A673 (cell line): ENCODE measurements at regions of chr3 and their contacts with region 1.

Region 1: DNA sequence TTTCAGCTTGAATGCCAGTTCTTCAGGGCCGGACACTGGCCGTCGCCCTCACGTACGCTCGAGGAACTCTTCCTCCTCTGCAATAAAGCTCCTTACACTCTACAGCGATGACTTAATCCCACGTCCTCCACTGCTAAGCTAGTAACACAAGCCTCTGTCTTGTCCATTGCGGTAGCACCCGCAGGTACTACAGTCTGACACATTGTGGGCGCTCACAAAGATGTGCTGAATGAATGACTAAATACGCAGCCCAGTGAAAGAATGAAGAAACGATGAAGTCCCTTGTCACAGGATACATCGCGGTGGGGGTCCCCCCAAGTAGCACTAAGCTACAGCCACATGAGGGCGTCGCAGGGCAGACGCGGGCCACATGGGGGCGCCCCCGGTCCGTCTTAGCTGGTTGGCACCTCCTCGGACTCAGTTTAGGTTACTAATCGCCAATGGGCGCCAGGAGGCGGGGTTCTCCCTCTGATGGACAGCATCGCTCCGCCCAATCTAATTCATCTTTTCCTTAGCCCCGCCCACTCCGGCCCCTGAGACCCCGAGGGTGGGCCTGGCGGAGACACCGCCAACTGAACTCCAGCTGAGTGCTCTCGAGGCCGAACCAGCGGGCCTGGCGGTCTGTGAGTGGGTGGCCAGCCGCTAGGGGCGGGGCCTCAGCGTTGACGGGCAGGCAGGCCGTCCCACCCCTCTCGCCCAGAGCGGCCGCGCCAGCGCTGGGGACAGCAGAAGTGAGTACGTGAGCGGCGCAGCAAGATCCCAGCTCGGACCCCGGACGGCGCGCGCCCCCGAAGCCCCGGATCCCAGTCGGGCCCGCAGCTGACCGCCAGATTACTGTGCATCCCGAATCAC is at the start of gene EPHB3:
- DNase-seq: peak; percentile 99
- H3K4me3 ChIP-seq: peak within 1 kb of the TSS; percentile 77
- H3K27ac ChIP-seq: peak within 1 kb of the TSS; percentile 8
- H3K4me1 ChIP-seq: peaks cover 16% of the 10 kb centered on the region
- H3K27me3 ChIP-seq: no peaks in the 10 kb centered on the region
- CTCF ChIP-seq: peak; percentile 100
- total RNA-seq, gene EPHB3: 15.6 and 19.4 TPM in 2 replicates

Region 2: GRCh38 chr3:184727357-184728009 is 166.2 kb after region 1 on chr3:
- CTCF ChIA-PET with region 1: interaction called, 5 read pairs
- POLR2A ChIA-PET with region 1: no interaction called
- intact Hi-C with region 1: loop called (anchors 1 kb)
- DNase-seq: peak; percentile 75
- H3K4me3 ChIP-seq: no peak overlapping the region
- H3K27ac ChIP-seq: no peak overlapping the region
- H3K4me1 ChIP-seq: no peaks in the 10 kb centered on the region
- H3K27me3 ChIP-seq: no peaks in the 10 kb centered on the region
- CTCF ChIP-seq: peak; percentile 85

Region 3: DNA sequence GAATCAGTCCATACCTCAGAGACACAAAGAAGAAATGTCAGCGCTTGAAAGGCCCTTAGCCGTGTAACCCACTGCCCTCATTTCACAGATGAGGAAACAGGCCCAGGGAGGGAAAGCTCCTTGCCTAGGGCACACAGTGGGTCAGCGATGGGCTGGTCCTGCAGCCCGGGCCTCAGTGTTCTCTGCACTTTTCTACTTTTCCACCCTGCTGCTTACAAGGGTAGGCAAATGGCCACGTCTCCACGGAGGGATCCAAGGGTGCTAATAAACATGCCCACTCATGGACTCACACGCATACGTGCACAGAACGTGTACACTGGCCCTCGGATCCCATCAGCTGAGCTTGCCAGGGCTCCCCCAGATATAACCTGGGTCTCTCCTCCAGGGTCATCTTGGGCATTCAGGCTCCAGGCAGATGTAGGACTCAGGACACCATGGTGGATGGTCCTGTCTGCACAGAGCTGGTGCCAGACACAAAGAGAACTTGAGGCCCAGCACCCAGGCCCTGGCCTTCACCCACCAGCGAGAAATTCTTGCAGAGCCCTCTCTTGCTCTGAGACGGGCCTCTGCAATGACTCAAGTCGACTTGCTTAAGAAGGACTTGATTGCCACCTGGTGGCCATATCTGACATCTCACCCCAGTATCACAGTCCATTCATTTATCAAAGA is 216.2 kb after region 1 on chr3:
- CTCF ChIA-PET with region 1: interaction called, 8 read pairs
- POLR2A ChIA-PET with region 1: interaction called, 3 read pairs
- intact Hi-C with region 1: loop called (anchors 1 kb)
- DNase-seq: peak; percentile 95
- H3K4me3 ChIP-seq: no peak overlapping the region
- H3K27ac ChIP-seq: no peak overlapping the region
- H3K4me1 ChIP-seq: peaks cover 11% of the 10 kb centered on the region
- H3K27me3 ChIP-seq: no peaks in the 10 kb centered on the region
- CTCF ChIP-seq: peak; percentile 81

Region 4: DNA sequence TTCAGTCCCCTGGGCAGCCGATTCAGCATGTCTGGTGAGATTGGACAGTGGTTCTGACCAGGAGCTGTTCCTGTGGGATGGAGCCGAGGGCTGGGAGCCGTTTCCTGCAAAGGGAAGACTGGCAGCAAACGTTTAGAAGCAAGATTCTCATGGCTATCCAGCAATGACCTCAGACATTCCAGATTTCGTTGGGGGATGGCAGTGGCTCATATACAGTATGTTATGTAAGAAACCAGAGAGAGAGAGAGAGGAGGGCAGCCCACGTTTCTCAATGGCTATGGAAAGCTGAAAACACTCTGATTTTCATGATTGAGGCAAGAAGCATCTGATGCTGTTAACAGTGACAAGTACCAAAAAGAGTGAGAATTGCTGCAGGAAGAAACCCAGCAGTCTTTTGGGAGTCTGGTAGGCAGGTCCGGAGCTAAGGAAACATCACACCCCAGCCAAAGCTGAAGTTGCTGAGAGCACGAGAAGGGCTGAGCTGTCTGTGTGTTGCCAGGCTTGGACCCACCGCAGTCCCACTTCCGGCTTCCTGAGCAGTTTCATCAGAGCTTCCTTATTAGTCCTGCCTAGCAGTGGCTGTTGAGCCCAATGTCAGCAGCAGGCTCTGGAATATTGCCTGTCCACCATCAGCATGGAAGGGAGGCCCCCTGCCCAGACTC is 225.1 kb after region 1 on chr3:
- CTCF ChIA-PET with region 1: interaction called, 20 read pairs
- POLR2A ChIA-PET with region 1: interaction called, 5 read pairs
- intact Hi-C with region 1: no loop called
- DNase-seq: peak; percentile 76
- H3K4me3 ChIP-seq: no peak overlapping the region
- H3K27ac ChIP-seq: peak overlapping the region; percentile 71
- H3K4me1 ChIP-seq: peaks cover 29% of the 10 kb centered on the region
- H3K27me3 ChIP-seq: no peaks in the 10 kb centered on the region
- CTCF ChIP-seq: no peak

Region 5: DNA sequence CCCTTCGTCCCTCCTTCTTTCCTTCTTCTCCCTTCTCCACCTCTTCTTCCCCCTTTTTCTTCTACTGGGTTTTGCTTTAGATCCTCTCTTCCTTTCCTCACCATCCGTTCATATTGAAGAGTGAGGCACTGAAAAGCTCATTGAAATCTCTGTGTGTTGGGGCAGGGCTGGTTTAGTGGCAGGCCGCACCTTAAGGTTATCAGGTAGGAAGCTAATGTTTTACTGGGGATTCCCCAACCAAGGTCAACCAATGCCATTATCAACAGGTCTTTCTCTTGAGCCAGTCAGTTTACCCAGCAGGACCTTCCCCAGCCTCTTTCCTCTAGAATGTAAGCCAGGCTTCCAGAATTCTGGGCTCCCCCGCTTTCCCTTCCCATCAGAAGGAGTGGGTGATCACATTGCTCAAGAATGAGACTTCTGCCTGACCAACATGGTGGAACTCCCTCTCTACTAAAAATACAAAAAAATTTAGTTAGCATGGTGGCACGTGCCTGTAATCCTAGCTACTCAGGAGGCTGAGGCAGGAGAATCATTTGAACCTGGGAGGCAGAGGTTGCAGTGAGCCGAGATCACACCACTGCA is 239.2 kb after region 1 on chr3:
- CTCF ChIA-PET with region 1: interaction called, 14 read pairs
- POLR2A ChIA-PET with region 1: no interaction called
- intact Hi-C with region 1: loop called (anchors 1 kb)
- DNase-seq: no peak
- H3K4me3 ChIP-seq: no peak overlapping the region
- H3K27ac ChIP-seq: no peak overlapping the region
- H3K4me1 ChIP-seq: no peaks in the 10 kb centered on the region
- H3K27me3 ChIP-seq: no peaks in the 10 kb centered on the region
- CTCF ChIP-seq: no peak

Region 6: DNA sequence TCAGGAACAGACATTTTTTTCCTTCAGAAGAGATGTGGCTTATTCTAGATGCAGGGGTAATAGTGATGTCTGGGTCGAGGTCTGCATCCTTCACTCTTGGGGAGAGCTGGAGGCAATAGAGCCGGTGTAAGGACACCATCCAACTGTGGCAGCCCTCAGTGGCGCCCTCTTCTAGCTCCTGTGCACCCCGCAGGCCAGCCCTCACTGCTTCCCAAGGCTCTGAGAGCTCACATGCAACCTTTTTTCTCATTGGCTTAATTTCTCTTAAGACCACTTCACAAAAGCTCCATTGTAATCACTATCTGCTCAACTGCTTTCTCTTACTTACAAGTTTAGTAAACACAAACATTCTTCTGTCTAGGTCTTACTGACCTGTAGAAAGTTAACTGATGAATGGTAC is 246.7 kb after region 1 on chr3:
- CTCF ChIA-PET with region 1: interaction called, 14 read pairs
- POLR2A ChIA-PET with region 1: no interaction called
- intact Hi-C with region 1: loop called (anchors 1 kb)
- DNase-seq: peak; percentile 33
- H3K4me3 ChIP-seq: no peak overlapping the region
- H3K27ac ChIP-seq: no peak overlapping the region
- H3K4me1 ChIP-seq: no peaks in the 10 kb centered on the region
- H3K27me3 ChIP-seq: no peaks in the 10 kb centered on the region
- CTCF ChIP-seq: peak; percentile 37